Calu3 (cell line): ENCODE measurements at regions of chr11 and their contacts with region 1.

Region 1: GRCh38 chr11:126695293-126695692 is 305.3 kb downstream of the KIRREL3 start:
- DNase-seq: no peak
- H3K4me3 Mint-ChIP-seq: no peak overlapping the region
- H3K27ac Mint-ChIP-seq: no peak overlapping the region
- H3K4me1 Mint-ChIP-seq: no peaks in the 10 kb centered on the region
- H3K27me3 Mint-ChIP-seq: peaks cover 37% of the 10 kb centered on the region
- CTCF ChIP-seq: no peak

Region 2: DNA sequence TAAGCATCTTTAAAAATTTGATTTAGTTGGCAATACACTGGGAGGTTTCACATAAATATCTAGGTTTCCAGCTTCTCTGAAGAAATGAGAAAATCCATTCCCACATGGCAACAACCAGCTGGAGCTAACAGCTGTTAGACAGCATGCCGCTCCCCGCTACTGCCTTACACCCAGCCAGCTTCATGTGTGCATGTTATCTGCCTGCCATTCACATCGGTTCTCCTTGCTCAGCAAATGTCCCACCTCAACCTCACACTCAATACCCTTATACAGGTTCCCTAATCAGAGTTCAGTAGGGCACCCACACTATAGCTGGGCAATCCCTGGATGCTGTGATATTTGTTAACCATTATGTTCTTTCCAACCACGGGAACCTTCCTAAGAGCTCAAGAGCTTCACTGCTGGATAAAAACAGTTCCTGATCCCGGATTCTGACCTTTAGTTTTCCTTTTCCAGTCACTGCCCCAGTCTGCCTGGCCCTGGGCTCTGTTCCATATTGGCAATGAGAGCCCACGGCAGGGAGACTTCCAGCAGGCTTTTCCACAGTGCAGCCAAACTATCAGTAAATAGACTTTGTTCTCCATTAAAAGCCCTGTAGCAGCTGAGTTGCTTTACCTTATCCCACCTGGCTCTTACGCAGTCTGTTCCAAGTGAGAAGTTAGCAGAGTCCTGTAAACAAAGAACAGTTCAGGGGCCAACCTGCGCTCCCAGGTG is 492.5 kb before region 1 on chr11:
- CTCF ChIA-PET with region 1: no interaction called
- intact Hi-C with region 1: no loop called
- DNase-seq: no peak
- H3K4me3 Mint-ChIP-seq: no peak overlapping the region
- H3K27ac Mint-ChIP-seq: no peak overlapping the region
- H3K4me1 Mint-ChIP-seq: no peaks in the 10 kb centered on the region
- H3K27me3 Mint-ChIP-seq: no peaks in the 10 kb centered on the region
- CTCF ChIP-seq: no peak

Region 3: DNA sequence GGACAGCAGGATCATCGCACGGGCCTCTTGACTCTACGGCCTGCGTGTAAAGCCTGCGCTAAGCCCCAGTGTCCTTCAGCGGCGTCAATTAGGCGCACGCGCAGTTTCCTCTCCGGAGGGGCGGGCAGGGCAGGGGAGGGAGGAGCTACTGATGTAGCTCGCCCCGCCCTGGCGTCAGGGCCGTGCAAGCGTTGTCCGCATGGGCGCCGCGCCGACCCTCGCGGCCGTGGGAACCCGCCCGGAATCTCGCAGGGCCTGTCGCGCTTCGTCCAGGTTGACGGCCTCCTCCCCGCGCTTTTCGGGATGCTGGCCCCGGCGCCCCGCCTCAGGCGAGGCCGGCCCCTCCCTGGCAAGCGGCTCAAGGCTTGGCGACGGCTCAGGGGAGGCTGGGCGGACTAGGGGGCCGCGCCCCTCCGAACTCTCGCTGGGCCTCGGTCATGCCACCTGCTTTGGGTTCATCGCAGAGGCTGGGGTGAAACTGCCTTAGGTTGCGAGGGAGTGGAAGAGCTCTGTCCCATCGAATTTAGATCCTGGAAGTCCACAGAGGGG is 278.7 kb before region 1 on chr11:
- CTCF ChIA-PET with region 1: no interaction called
- intact Hi-C with region 1: no loop called
- DNase-seq: peak; percentile 61
- H3K4me3 Mint-ChIP-seq: peak overlapping the region; percentile 60
- H3K27ac Mint-ChIP-seq: peak overlapping the region; percentile 27
- H3K4me1 Mint-ChIP-seq: peaks cover 8% of the 10 kb centered on the region
- H3K27me3 Mint-ChIP-seq: no peaks in the 10 kb centered on the region
- CTCF ChIP-seq: no peak

Region 4: GRCh38 chr11:126683766-126684728 is 11.2 kb before region 1 on chr11:
- CTCF ChIA-PET with region 1: interaction called, 10 read pairs
- intact Hi-C with region 1: no loop called
- DNase-seq: no peak
- H3K4me3 Mint-ChIP-seq: no peak overlapping the region
- H3K27ac Mint-ChIP-seq: no peak overlapping the region
- H3K4me1 Mint-ChIP-seq: no peaks in the 10 kb centered on the region
- H3K27me3 Mint-ChIP-seq: peaks cover 80% of the 10 kb centered on the region
- CTCF ChIP-seq: no peak

Region 5: DNA sequence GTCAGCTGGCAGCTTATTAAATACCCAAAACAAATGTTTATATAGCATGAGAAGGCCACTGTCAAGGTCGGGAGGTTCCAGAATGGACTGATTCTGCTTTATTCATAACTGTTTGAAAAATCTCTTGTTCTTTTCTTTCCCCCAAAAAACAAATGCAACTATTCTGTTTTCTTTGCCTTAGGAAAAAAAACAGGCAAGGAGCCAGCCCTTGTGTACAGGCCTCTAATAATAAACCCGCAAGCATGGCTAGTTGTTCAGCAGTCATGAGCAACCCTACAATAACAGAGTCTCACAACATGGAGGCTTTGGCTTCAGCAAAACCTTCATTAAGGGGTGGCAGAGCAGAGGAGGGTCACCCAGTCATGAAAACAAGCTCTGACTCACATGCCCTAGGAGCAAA is 113.5 kb after region 1 on chr11:
- CTCF ChIA-PET with region 1: no interaction called
- intact Hi-C with region 1: no loop called
- DNase-seq: no peak
- H3K4me3 Mint-ChIP-seq: no peak overlapping the region
- H3K27ac Mint-ChIP-seq: no peak overlapping the region
- H3K4me1 Mint-ChIP-seq: no peaks in the 10 kb centered on the region
- H3K27me3 Mint-ChIP-seq: no peaks in the 10 kb centered on the region
- CTCF ChIP-seq: no peak